Activated CD4-positive, alpha-beta T cell treated with anti-CD3 and anti-CD28 coated beads, Interleukin-2, amount 10 ng/mL, durations not matched to agents 24 days and 14 days (primary cell): ENCODE measurements at regions of chr15 and their contacts with region 1.

Region 1: GRCh38 chr15:71730277-71731144 is 79.8 kb upstream of the NR2E3 start:
- DNase-seq: peak; percentile 78
- H3K4me3 Mint-ChIP-seq: no peak overlapping the region
- H3K27ac Mint-ChIP-seq: no peak overlapping the region
- H3K4me1 Mint-ChIP-seq: no peaks in the 10 kb centered on the region
- H3K27me3 Mint-ChIP-seq: no peaks in the 10 kb centered on the region

Region 2: GRCh38 chr15:71448688-71449114 is 281.8 kb before region 1 on chr15:
- intact Hi-C with region 1: loop called (anchors 2 kb)
- DNase-seq: no peak
- H3K4me3 Mint-ChIP-seq: no peak overlapping the region
- H3K27ac Mint-ChIP-seq: no peak overlapping the region
- H3K4me1 Mint-ChIP-seq: no peaks in the 10 kb centered on the region
- H3K27me3 Mint-ChIP-seq: no peaks in the 10 kb centered on the region

Region 3: DNA sequence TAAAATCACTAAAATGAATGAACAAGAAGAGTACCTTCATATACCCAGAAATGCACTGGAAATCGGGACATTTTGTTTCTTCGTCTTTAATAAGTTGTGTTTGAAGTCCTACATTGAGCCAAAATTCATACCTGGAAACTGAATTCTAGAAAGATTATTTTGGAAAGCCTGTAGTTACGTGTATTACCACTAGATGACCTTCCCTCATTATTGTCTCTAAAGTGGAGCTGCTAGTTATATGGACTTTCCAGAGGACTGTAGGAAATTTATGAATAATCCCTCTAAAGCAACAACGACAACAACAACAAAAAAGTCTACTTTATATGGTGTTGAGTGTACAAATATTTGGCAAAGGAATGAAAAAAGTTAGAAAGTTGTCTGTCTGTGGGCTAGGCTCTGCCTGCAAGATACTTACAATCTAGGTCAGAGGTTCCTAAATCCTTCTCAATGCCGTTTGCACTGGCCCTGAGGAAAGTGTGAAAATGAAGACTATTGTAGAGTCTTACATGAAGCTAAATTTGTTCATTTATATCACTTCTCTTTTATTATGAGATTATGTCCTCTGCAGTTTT is 155.0 kb before region 1 on chr15:
- intact Hi-C with region 1: loop called (anchors 5 kb)
- DNase-seq: no peak
- H3K4me3 Mint-ChIP-seq: no peak overlapping the region
- H3K27ac Mint-ChIP-seq: no peak overlapping the region
- H3K4me1 Mint-ChIP-seq: no peaks in the 10 kb centered on the region
- H3K27me3 Mint-ChIP-seq: peaks cover 8% of the 10 kb centered on the region